Adrenal gland (tissue), 19 donors: ENCODE measurements at regions of chr10 and their contacts with region 1.

Region 1: GRCh38 chr10:43396928-43397624 is 11.9 kb downstream of the HNRNPF start:
- DNase-seq: peak; percentile 88 to 96 (median 93)
- H3K4me3 ChIP-seq: peak overlapping the region in 2 of 4 donors; percentile 66 to 92
- H3K27ac ChIP-seq: peak overlapping the region; percentile 94 to 100 (median 98)
- H3K4me1 ChIP-seq: peaks cover 25 to 66% of the 10 kb centered on the region in 2 donors
- H3K27me3 ChIP-seq: no peaks in the 10 kb centered on the region
- CTCF ChIP-seq: no peak
- POLR2A ChIP-seq: peak; percentile 75 to 81

Region 2: DNA sequence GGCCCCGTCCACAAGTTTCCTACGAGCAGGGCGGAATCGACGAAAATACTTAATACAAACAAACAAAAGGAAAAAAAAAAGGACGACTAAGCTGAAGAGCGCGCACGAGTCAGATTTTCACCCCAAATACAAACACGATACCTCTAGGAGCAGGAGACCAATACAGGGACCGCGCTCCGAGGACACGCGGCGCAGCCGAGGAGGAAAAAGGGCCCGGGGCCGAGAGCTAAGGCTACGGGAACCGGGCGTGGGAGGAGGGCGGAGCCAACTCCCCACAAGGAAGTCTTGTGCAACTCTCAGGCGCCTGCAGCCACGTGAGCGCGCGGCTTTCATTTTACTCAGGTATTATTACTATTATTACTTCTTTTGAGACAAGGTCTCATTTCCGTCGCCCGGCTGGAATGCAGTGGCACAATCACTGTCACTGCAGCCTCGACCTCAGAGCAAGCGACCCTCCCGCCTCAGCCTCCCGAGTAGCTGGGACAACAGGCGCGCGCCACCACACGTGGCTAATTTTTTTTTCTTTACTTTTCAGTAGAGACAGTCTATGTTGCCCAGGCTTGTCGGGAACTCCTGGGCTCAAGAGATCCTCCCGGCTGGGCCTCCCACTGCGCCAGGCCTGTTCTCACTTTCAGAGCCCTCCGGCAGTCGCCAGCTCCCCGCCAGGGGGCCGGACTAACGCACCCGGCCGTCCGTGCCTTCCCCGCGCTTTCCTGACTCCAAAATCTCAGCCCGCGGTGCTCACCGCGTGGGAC is 10.7 kb after region 1 on chr10:
- intact Hi-C with region 1: no loop called
- DNase-seq: peak; percentile 90 to 96 (median 94)
- H3K4me3 ChIP-seq: peak overlapping the region in 3 of 4 donors; percentile 75 to 97 (median 89)
- H3K27ac ChIP-seq: peak overlapping the region; percentile 99 to 100 (median 99)
- H3K4me1 ChIP-seq: peaks cover 23 to 43% of the 10 kb centered on the region in 2 donors
- H3K27me3 ChIP-seq: no peaks in the 10 kb centered on the region
- CTCF ChIP-seq: peak in 5 of 6 experiments; percentile 36 to 58 (median 47)
- POLR2A ChIP-seq: peak; percentile 42 to 70

Region 3: DNA sequence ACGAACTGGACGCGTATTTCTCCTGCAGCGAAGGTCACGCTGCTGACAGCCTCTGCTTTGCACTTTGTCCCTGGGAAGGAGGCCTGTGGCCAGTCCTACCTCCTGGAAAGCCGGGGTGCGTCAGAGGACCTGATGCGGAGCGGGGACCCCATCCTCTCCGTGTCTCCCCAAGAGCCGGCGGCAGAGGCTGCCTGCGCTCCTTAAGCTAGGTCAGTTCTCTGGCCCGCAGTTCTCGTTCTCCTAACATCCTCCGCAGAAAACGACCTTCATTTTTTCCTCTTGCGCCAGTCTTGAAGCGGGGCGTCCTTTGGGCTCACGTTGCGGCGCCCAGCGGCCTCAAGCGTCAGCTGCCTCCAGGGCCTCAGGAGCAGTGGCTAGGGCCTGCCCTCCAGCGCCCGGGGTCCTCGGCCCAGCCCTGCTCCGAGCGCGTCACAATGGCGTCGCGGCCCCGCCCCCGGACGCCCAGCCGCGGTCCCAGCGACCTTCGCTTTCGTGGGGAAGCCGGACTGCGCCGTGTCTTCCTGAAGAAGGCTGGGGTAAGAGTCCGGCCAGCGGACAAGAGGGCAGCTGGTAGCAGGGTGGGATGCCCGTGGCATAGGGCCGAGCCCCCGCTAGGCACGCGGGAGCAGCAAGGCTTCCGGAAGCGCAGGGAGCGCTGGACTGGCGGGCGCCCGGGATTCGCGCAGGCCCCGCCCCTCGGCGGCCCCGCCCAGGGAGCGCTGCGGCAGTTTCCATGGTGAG is 39.5 kb after region 1 on chr10 and contains the start of gene ZNF487:
- intact Hi-C with region 1: loop called in 1 of 2 experiments (anchors 5 kb)
- DNase-seq: peak; percentile 88 to 94 (median 91)
- H3K4me3 ChIP-seq: peak within 1 kb of the TSS; percentile 39 to 97 (median 82)
- H3K27ac ChIP-seq: peak within 1 kb of the TSS; percentile 82 to 100 (median 98)
- H3K4me1 ChIP-seq: peaks cover 6 to 10% of the 10 kb centered on the region in 2 donors
- H3K27me3 ChIP-seq: no peaks in the 10 kb centered on the region
- CTCF ChIP-seq: peak in 3 of 6 experiments; percentile 10 to 31 (median 25)
- POLR2A ChIP-seq: peak; percentile 84 to 95
- total RNA-seq, gene ZNF487: 2.1 to 10.1 (median 4.6) TPM

Region 4: GRCh38 chr10:43595739-43596298 is 198.7 kb after region 1 on chr10:
- intact Hi-C with region 1: no loop called
- DNase-seq: no peak
- H3K4me3 ChIP-seq: no peak overlapping the region
- H3K27ac ChIP-seq: no peak overlapping the region
- H3K4me1 ChIP-seq: peaks cover 0 to 11% of the 10 kb centered on the region in 2 donors
- H3K27me3 ChIP-seq: no peaks in the 10 kb centered on the region
- CTCF ChIP-seq: no peak
- POLR2A ChIP-seq: no peak

Region 5: DNA sequence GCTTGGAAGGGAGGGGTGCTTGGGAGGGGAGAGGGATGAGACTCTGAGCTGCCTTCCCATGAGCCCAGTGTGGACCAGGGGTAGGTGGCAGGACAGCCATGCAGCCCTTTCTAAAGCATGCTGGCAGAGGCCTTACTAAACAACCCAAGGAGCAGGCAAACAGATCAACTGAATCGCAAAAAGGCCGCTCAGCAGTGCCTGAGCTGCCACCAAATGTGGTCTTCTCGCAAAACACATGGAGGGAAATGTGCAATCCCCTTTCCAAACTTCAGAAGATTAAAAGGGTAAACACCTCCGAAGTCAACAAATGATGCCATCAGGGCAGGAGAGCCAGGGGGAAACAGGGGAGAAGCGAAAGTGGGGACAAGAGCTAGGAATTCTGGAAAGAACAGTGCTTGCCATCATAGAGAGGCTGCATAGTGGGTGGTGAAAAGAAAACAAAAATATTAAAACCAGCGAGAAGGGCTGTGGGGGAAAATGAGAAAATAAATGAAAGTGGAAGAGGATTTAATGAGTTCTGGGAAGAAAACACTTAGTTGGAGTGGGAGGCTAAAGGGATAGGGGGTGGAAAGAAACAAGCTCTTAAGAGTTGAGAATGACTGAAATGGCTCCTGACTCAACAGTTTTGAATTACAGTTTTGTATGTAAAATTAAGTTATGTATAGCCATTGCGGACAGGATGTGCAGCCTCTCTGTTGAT is 313.8 kb after region 1 on chr10:
- intact Hi-C with region 1: no loop called
- DNase-seq: no peak
- H3K4me3 ChIP-seq: no peak overlapping the region
- H3K27ac ChIP-seq: no peak overlapping the region
- H3K4me1 ChIP-seq: no peaks in the 10 kb centered on the region
- H3K27me3 ChIP-seq: no peaks in the 10 kb centered on the region
- CTCF ChIP-seq: no peak
- POLR2A ChIP-seq: no peak